Motor neuron (in vitro differentiated cells): ENCODE measurements at regions of chr3 and their contacts with region 1.

Region 1: GRCh38 chr3:160343132-160343531 is 55.9 kb downstream of the IFT80 start:
- ATAC-seq: no peak
- H3K4me3 ChIP-seq: no peak overlapping the region
- H3K27ac ChIP-seq: no peak overlapping the region
- H3K4me1 ChIP-seq: no peaks in the 10 kb centered on the region

Region 2: DNA sequence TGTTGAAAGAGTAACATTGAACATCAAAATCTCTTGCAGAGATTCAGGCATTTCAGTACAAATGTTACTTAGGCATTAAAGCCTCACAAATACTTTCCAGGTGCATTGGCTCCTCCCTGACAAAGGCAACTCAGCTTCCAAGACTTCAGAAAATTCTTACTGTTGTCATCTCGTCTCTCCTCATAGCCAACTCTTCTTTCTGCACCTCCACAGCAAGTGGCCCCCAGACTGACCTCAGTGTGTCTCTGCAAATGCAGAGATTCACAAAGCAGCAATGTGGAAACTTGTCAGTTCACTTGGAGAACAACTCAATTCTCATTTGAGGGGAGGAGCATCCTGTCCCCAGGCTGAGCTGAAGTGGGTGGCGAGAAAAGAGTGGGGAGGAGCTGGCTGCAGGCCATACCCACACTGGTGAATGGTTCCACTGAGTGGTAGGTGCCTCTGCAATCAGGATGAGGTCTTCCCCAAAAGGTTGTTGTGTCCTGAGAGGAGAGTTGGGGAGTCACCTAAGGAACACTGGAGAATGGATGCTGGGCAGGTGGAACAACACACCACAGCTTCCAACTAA is 603.2 kb before region 1 on chr3:
- in situ Hi-C with region 1: no loop called
- ATAC-seq: no peak
- H3K4me3 ChIP-seq: no peak overlapping the region
- H3K27ac ChIP-seq: no peak overlapping the region
- H3K4me1 ChIP-seq: no peaks in the 10 kb centered on the region

Region 3: DNA sequence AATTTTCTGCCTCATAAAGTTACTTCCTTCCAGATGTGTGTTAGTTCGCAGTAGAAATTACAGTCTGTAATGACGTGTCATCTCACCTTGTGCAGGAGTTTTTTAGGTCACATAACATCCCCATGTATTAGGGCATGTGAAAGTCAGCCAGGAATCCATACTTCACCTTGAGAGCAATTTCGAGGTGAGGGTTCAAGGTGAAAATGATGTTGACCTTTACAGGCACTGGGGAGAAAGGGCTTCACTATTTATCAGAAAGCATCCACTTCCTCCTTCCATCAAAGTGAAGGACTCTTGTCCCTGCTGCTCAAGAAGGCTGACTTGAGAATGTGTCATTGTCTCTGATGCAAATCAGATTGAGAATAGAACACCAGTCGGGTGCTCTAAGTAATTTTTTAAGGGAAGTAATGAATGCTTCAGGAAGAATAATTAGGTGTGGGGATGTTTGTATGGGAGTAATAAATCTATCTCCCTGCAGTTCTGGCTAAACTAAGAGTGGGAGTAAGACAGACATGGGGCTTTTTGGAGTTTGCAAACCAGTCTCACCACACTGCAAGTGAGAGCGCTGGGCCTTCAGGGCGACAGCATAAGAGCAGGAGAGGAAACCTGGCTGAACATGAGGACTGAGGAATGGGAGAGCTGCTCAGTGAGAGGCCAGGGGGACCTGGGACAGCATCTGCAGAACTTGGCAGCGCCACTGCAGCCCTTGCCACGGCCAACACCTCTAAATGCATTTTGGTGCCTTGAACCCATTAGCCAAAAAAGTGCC is 440.4 kb before region 1 on chr3:
- in situ Hi-C with region 1: no loop called
- ATAC-seq: peak in 1 of 8 experiments; percentile 14
- H3K4me3 ChIP-seq: no peak overlapping the region
- H3K27ac ChIP-seq: no peak overlapping the region
- H3K4me1 ChIP-seq: no peaks in the 10 kb centered on the region

Region 4: GRCh38 chr3:160027541-160028195 is 315.5 kb before region 1 on chr3:
- in situ Hi-C with region 1: loop called in 2 of 9 experiments (anchors 10 to 25 kb)
- ATAC-seq: peak in 3 of 8 experiments; percentile 31 to 89 (median 87)
- H3K4me3 ChIP-seq: no peak overlapping the region
- H3K27ac ChIP-seq: no peak overlapping the region
- H3K4me1 ChIP-seq: no peaks in the 10 kb centered on the region

Region 5: DNA sequence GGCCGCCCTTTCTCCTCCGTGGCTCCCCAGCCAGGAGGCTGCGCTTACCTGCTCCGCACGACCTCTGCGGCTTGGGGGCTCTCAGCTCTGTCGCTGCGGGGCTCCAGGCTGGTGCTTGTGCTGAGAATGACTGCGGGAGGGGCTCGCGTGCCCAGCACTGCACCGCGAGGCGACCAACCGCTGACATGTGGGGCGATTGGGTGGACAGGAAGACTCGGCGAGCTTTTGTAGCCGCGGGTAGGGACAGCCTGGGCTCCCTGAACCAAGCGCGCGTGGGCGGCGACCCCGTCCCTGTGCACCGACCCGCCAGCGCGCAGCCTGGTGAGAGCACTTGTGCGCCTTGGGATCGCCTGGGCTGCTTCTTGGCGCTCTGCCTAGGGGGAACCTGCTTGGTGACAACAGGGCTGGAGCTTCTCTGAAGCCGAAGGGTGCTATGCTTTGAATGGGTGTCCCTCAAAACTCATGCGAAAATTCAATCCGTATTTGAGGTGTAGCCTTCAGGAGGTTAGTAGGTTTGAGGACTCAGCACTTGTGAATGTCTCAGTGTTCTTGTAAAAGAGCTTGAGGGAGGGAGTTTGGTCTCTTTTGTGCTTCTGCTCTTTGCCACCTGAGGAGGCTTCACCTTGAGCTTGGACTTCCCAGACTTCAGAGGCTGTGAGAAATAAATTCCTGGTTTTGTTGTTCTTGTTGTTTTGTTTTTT is 304.1 kb before region 1 on chr3:
- in situ Hi-C with region 1: loop called in 2 of 9 experiments (anchors 10 to 25 kb)
- ATAC-seq: peak; percentile 36 to 94 (median 82)
- H3K4me3 ChIP-seq: peak overlapping the region; percentile 14 to 27 (median 19)
- H3K27ac ChIP-seq: no peak overlapping the region
- H3K4me1 ChIP-seq: peaks cover 6% of the 10 kb centered on the region in 2 donors

Region 6: GRCh38 chr3:160099834-160100233 is 243.3 kb before region 1 on chr3:
- in situ Hi-C with region 1: no loop called
- ATAC-seq: no peak
- H3K4me3 ChIP-seq: no peak overlapping the region
- H3K27ac ChIP-seq: no peak overlapping the region
- H3K4me1 ChIP-seq: no peaks in the 10 kb centered on the region

Region 7: GRCh38 chr3:160163229-160163878 is 179.8 kb before region 1 on chr3:
- in situ Hi-C with region 1: loop called in 2 of 9 experiments (anchors 10 to 25 kb)
- ATAC-seq: peak in 3 of 8 experiments; percentile 17 to 38 (median 19)
- H3K4me3 ChIP-seq: no peak overlapping the region
- H3K27ac ChIP-seq: no peak overlapping the region
- H3K4me1 ChIP-seq: peaks cover 15 to 36% of the 10 kb centered on the region in 2 donors